ENCODE measurements at regions of chr21 and their contacts with region 1.

Region 1: DNA sequence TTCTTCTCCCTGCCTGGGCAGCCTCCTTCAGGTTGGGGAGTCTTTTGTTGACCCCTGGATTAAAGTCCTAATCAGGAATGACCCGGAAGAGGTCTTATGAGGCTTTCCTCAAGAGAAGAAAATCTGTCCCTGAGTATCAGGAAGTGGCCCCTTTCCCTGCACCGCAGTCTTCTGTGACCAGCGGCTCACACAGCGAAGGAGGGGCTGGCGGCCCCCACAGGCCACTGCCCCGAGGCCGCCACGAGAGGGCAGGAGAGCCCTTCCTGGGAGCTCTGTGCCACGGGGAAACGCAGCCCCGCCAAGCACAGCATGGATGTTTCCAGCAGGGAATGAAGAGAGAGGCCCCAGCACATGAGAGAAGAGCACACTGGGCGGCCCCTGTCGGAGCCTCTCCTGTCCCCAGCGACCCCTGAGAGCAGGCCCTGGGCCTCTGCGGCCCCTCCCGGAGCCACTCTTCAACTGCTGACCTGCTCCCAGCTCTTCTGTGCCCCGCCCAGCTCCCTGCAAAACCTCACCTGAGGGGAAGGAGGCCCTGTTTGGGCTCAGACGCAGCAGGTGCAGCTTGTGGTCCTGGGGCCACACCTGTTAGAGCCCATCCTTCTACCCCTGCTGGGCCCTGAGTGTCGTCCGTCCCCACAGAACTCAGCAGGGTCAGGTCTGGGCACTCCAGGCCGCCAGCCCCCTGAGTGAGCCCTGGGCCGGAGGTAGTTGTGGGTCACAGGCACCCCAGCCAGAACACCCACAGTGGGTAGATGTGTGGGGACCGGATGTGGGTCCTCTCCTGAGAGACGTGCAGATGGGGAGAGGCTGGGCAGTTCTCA is 4.9 kb upstream of the POFUT2 start:
- DNase-seq: peak; percentile 92
- ATAC-seq: peak; percentile 73

Region 2: DNA sequence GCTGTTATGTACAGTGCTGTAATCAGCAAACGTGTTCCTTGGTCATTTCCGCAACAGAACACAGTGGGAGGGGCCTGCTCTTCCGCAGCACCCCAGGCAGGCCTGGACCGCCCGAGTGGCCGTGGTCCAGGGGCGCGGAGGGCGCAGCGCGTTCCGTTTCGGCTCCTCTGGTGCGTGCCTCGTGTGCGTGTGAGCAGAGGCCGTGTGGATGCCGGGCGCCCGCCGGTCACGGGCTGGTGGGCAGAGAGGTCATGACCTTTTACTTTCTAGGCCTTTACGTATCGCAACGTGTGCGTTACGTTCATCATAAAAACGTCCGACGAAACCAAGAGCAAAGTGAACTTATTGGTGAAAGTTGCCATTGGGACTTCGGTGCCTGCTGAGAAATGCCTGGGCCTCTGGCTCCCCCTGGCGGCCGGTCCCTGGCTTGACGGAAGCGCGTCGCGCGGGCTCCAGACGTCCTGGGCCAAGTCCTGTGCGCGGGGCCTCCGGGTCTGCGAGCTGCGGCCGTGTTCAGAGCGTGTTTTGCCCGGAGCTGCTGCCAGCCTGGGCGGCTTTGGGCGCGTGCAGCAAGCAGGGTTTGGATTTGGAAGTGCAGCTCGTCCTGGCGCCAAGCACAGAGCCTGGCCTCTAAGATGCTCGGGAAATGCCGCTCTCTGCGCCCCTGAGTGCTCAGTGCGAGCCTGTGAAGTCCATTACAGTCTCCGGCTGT is 146.7 kb after region 1 on chr21:
- intact Hi-C with region 1: loop called (anchors 5 kb)
- DNase-seq: peak; percentile 92
- ATAC-seq: peak; percentile 88

Measured in left ventricle myocardium superior (tissue), 1 donor.